A549 (cell line): ENCODE measurements at regions of chr3 and their contacts with region 1.

Region 1: GRCh38 chr3:129249276-129250065 is at the start of gene COPG1:
- DNase-seq: peak; percentile 83 to 90
- ATAC-seq: peak; percentile 88 to 93
- H3K4me3 ChIP-seq: peak within 1 kb of the TSS; percentile 85
- H3K27ac ChIP-seq: peak within 1 kb of the TSS; percentile 95 to 98
- H3K4me1 ChIP-seq: peaks cover 21% of the 10 kb centered on the region; the same call in 2 of the 3 replicates
- CTCF ChIP-seq: no peak
- EP300 ChIP-seq: no peak
- POLR2A ChIP-seq: peak; percentile 84
- RAD21 ChIP-seq: no peak
- polyA plus RNA-seq, gene COPG1: 86.5 and 90.2 TPM in 2 replicates

Region 2: DNA sequence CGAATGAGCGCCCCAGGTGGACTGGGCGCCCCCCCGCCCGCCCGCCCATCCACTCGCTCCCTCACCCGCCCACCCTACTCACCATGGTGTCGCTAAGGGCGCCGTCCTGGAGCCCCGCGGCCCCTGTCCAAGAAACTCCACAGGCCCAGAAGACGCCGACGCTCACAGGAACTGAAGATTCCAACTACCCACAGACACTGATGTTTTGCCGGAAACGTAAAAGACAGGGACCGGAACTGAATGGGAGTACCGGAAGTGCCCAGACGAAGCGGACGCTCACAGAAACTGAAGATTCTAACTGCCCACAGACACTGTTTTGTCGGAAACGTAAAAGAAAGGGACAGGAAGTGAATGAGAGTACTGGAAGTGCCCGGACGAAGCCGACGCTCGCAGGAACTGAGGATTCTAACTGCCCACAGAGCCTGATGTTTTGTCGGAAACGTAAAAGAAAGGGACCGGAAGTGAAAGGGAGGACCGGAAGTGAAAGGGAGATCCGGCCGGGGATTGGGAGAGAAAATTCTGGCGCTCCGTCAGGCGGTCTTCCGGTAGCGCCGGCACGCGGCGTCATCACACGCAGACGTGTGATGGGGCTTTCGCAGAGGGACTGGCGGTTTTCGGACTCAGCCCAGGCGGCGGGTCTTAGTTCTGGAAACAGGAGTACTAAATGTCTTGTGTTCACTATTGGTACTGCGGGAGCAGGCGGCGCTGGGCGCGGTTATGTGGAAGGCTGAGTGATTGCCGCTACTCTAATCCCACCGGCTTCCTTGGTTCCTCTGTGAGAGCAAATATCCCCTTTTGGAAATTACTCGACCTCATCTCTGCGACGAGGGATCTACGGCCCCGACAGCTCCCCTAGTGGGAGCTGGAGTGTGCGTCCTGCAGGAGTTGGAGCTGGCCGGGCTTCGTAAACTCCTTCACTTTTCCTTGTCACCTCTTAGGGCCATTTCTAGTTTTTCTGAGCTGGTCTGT is 88.3 kb before region 1 on chr3 and contains the start of gene ISY1:
- CTCF ChIA-PET with region 1: interaction called, 83 read pairs
- POLR2A ChIA-PET with region 1: interaction called, 24 read pairs
- DNase-seq: peak; percentile 91 to 95
- ATAC-seq: peak; percentile 87 to 89
- H3K4me3 ChIP-seq: peak within 1 kb of the TSS; percentile 85
- H3K27ac ChIP-seq: peak within 1 kb of the TSS; percentile 95 to 100
- H3K4me1 ChIP-seq: peaks cover 16% of the 10 kb centered on the region; the same call in 2 of the 3 replicates
- CTCF ChIP-seq: peak; percentile 58
- EP300 ChIP-seq: no peak
- POLR2A ChIP-seq: peak; percentile 36; the same call in 1 of the 2 replicates
- RAD21 ChIP-seq: peak; percentile 32 to 42; a peak in 3 of 5 replicates
- polyA plus RNA-seq, gene ISY1: 21.3 and 27.6 TPM in 2 replicates

Region 3: DNA sequence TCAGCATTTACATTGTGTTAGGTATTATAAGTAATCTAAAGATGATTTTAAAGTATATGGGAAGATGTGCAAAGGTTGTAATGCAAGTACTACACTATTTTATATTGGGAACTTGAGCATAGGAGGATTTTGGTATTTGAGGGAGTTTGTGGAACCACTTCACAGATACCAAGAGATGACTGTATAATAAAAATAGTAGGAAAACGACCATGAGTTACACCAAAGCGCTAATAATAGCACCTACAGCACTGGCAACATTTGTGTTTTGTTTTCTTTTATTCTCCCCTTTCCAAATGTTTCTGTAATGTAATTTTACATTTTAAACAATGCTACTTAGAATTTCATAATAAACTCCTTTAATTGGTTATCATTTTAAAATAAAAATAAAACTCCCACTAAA is 76.3 kb before region 1 on chr3:
- CTCF ChIA-PET with region 1: interaction called, 22 read pairs
- POLR2A ChIA-PET with region 1: no interaction called
- DNase-seq: no peak
- ATAC-seq: no peak
- H3K4me3 ChIP-seq: no peak overlapping the region
- H3K27ac ChIP-seq: no peak overlapping the region
- H3K4me1 ChIP-seq: peaks cover 13% of the 10 kb centered on the region
- CTCF ChIP-seq: no peak
- EP300 ChIP-seq: no peak
- POLR2A ChIP-seq: no peak
- RAD21 ChIP-seq: no peak

Region 4: DNA sequence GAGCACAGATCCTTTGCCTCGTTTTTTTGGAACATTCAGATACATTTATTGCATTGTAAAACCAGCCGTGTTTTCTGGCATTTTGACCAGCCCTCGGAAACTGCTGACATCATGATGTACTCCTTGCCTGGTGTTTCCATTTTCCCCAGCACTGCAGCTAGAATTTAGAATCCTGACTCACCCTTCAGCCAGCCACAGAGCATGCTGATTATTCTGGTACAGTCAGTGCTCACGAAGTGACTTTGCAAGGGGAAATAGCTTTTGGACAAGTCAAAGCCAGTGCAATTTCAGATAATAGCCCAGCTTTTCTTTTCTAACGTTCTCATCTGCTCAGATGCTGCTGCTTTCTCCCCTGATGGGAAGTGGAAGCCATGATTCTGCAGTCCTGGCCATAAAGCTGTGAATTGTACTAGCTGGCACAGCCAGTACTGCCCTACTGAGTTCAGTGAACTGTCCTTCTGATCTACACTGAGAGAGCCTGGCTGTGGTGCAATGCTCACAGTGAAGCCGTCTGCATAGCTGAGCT is 53.7 kb before region 1 on chr3:
- CTCF ChIA-PET with region 1: interaction called, 27 read pairs
- POLR2A ChIA-PET with region 1: interaction called, 8 read pairs
- DNase-seq: peak in 1 of 2 experiments; percentile 55
- ATAC-seq: peak; percentile 96 to 98
- H3K4me3 ChIP-seq: no peak overlapping the region
- H3K27ac ChIP-seq: peak overlapping the region; percentile 77 to 88
- H3K4me1 ChIP-seq: peaks cover 29% of the 10 kb centered on the region
- CTCF ChIP-seq: no peak
- EP300 ChIP-seq: no peak
- POLR2A ChIP-seq: no peak
- RAD21 ChIP-seq: no peak

Region 5: DNA sequence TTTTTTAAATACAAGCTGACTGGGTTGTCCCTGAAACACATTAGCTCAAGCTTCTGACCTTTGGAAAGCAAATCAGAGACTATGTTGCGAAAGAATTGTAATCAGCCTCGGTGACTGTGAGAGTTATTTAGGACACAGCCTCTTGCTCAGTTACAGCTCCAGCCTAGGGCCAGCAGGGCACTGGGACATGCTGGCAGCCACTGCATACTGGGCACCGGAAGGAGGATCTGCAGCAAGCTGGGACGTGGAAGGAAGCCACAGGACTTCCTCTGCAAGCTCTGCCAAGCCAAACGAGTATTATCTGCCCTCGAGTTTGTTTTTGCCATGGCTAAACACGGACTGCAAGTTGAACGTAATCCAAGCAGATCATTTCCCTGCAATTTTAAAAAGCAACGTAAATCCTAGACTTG is 24.5 kb before region 1 on chr3:
- CTCF ChIA-PET with region 1: interaction called, 82 read pairs
- POLR2A ChIA-PET with region 1: interaction called, 9 read pairs
- DNase-seq: peak; percentile 80 to 86
- ATAC-seq: peak; percentile 85 to 91
- H3K4me3 ChIP-seq: 0 out of 3 replicates have a peak overlapping the region, but pooled peaks have one; percentile 12
- H3K27ac ChIP-seq: peak overlapping the region; percentile 85 to 88
- H3K4me1 ChIP-seq: peaks cover 51% of the 10 kb centered on the region
- CTCF ChIP-seq: no peak
- EP300 ChIP-seq: no peak
- POLR2A ChIP-seq: peak; percentile 43
- RAD21 ChIP-seq: peak; percentile 7 to 23; a peak in 2 of 5 replicates

Region 6: DNA sequence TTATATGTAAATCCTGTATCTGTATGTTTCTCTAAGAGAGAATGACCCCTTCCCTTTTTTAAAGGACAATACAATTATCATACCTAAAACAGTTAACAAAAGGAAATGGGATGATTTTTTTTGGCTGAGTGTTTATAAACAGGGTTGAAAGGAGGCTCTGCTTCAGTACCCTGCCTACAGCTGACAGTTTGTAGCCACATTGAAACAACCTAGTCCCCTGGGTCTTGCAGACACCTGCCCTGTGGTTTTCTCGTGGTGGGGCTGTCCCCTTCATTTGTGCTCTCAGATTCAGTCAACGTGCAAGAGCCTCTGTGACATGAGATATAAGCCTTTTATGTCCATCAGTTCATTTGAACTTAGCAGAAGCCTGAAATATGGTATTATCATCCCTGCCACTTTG is 26.9 kb after region 1 on chr3:
- CTCF ChIA-PET with region 1: no interaction called
- POLR2A ChIA-PET with region 1: no interaction called
- DNase-seq: no peak
- ATAC-seq: no peak
- H3K4me3 ChIP-seq: no peak overlapping the region
- H3K27ac ChIP-seq: no peak overlapping the region
- H3K4me1 ChIP-seq: peaks cover 16% of the 10 kb centered on the region
- CTCF ChIP-seq: no peak
- EP300 ChIP-seq: no peak
- POLR2A ChIP-seq: no peak
- RAD21 ChIP-seq: no peak